ENCODE measurements at regions of chr1 and their contacts with region 1.

Region 1: DNA sequence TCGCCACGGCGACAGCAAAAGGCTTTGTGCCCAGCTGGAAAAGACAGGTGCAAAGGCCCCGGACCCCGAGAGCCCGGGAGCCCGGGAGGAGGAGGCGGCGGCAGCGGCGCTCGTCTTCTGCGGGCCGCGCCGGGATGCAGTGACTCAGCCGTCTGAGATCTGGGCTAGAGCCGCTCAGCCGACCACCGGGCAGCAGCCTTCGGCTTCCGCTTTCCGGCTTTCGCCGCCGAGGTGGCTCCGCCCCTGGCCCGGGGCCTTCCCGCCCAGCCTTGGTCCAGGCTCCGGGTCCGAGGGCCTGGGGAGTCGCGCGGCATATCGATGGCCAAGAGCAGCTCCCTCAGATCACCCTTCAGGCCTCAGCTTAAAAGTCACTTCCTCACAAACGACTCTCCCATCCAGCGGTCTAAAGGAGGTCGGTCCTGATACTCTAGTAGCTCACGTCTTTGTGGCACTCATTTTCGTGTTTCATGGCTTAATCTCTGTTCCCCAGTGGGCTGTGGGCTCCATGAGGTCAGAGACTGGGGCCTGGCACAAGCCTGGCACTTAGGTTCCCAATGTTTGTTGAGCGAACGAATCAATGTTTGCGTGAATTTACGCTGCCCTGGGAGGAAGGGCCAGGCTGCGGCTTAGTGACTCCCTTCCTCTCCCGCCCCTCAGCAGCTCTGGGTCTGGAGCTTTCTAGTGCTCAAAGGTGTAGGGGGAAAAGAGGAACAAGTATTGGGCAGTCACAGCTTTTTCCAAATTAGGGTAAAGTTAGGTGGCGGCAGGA is at the start of gene PHTF1:
- DNase-seq: peak; percentile 16 to 86
- H3K4me3 ChIP-seq: peak within 1 kb of the TSS; percentile 85 to 86
- H3K27ac ChIP-seq: peak within 1 kb of the TSS; percentile 97 to 99
- H3K4me1 ChIP-seq: peaks cover 0 to 7% of the 10 kb centered on the region in 2 donors
- H3K27me3 ChIP-seq: no peaks in the 10 kb centered on the region
- CTCF ChIP-seq: no peak
- total RNA-seq, gene PHTF1: 38.6 TPM

Region 2: GRCh38 chr1:112390775-112391602 is 1368.5 kb before region 1 on chr1:
- intact Hi-C with region 1: loop called (anchors 5 kb)
- DNase-seq: peak; percentile 71 to 97
- H3K4me3 ChIP-seq: peak overlapping the region; percentile 48 to 64
- H3K27ac ChIP-seq: peak overlapping the region; percentile 92 to 98
- H3K4me1 ChIP-seq: peaks cover 8 to 45% of the 10 kb centered on the region in 2 donors
- H3K27me3 ChIP-seq: no peaks in the 10 kb centered on the region
- CTCF ChIP-seq: peak; percentile 90 to 96 (median 91)

Region 3: GRCh38 chr1:113389953-113390834 is 369.3 kb before region 1 on chr1 and contains the start of gene MAGI3:
- intact Hi-C with region 1: loop called (anchors 1 kb)
- DNase-seq: peak; percentile 87 to 98
- H3K4me3 ChIP-seq: peak within 1 kb of the TSS; percentile 96 to 99
- H3K27ac ChIP-seq: peak within 1 kb of the TSS; percentile 89 to 91
- H3K4me1 ChIP-seq: peaks cover 5 to 6% of the 10 kb centered on the region in 2 donors
- H3K27me3 ChIP-seq: no peaks in the 10 kb centered on the region
- CTCF ChIP-seq: no peak
- total RNA-seq, gene MAGI3: 14.9 TPM

Region 4: GRCh38 chr1:113793878-113794834 is 34.6 kb after region 1 on chr1:
- intact Hi-C with region 1: loop called (anchors 5 kb)
- DNase-seq: no peak
- H3K4me3 ChIP-seq: no peak overlapping the region
- H3K27ac ChIP-seq: no peak overlapping the region
- H3K4me1 ChIP-seq: peaks cover 0 to 10% of the 10 kb centered on the region in 2 donors
- H3K27me3 ChIP-seq: no peaks in the 10 kb centered on the region
- CTCF ChIP-seq: no peak

Region 5: DNA sequence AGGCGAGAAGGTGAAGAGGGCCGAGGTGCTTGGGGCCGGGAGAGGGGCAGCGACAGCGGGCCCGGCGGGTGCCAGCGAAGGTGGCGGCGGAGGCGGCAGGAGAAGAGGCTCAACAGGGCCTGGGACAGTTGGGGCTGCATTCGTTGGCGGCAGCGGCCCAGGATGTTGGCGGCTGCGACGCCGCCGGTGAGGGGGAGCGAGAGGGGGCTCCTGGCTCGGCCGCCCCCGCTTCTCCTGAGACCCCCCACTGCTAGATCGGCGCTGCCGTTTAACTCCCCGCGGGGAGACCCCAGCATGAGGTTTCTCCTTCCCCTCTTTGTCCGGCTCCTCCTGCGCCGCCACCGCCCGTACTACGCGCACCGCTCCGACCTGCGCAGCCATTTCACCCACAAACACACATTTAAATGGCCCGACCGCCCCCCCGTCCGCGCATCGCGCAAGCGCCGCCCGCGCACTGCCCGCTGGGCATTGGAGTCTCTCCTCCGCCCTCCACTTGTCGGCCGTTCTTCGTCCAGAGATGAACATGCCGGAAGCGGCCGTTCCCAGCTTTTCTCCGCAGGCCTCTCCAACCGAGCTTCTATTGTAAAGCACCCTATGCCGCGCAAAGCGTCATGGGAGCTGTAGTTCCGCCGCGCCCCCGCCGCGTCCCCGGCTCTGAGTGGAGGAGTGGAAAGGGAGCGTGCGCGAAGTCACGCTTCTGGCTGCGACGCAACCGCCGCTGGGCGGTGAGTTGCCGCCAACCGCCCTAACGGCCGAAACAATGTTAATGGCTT is 52.6 kb after region 1 on chr1 and contains the start of gene RSBN1:
- intact Hi-C with region 1: loop called (anchors 1 kb)
- DNase-seq: peak; percentile 99 to 100
- H3K4me3 ChIP-seq: peak within 1 kb of the TSS; percentile 82 to 91
- H3K27ac ChIP-seq: peak within 1 kb of the TSS; percentile 95 to 97
- H3K4me1 ChIP-seq: peaks cover 0 to 5% of the 10 kb centered on the region in 2 donors
- H3K27me3 ChIP-seq: no peaks in the 10 kb centered on the region
- CTCF ChIP-seq: peak in 1 of 3 experiments; percentile 7
- total RNA-seq, gene RSBN1: 22.7 TPM

Region 6: GRCh38 chr1:113928941-113929749 is 169.6 kb after region 1 on chr1 and contains the start of gene HIPK1:
- intact Hi-C with region 1: loop called (anchors 2 kb)
- DNase-seq: peak; percentile 67 to 96
- H3K4me3 ChIP-seq: peak within 1 kb of the TSS; percentile 83 to 90
- H3K27ac ChIP-seq: peak within 1 kb of the TSS; percentile 92 to 94
- H3K4me1 ChIP-seq: peaks cover 4 to 33% of the 10 kb centered on the region in 2 donors
- H3K27me3 ChIP-seq: no peaks in the 10 kb centered on the region
- CTCF ChIP-seq: peak in 1 of 3 experiments; percentile 35
- total RNA-seq, gene HIPK1: 41.7 TPM